ENCODE measurements at regions of chr14 and their contacts with region 1.

Region 1: GRCh38 chr14:105527661-105528581 is 1.5 kb downstream of the TMEM121 start:
- DNase-seq: peak; percentile 65 to 86 (median 78)
- ATAC-seq: peak; percentile 89
- H3K4me3 ChIP-seq: peak overlapping the region; percentile 54
- H3K4me3 Mint-ChIP-seq: peak overlapping the region; percentile 42 to 89 (median 72)
- H3K27ac ChIP-seq: no peak overlapping the region
- H3K27ac Mint-ChIP-seq: peak overlapping the region in 2 of 9 donors; percentile 32 to 49
- H3K4me1 ChIP-seq: peaks cover 9 to 14% of the 10 kb centered on the region in 2 donors
- H3K4me1 Mint-ChIP-seq: peaks cover 0 to 24% (median 16%) of the 10 kb centered on the region in 7 donors
- H3K27me3 ChIP-seq: peaks cover 0 to 4% of the 10 kb centered on the region in 2 donors
- H3K27me3 Mint-ChIP-seq: peaks cover 0 to 43% (median 0%) of the 10 kb centered on the region in 5 donors

Region 2: GRCh38 chr14:105203057-105203531 is 324.8 kb before region 1 on chr14:
- CTCF ChIA-PET with region 1: no interaction called
- POLR2A ChIA-PET with region 1: no interaction called
- intact Hi-C with region 1: loop called in 1 of 2 experiments (anchors 1 kb)
- DNase-seq: peak in 6 of 9 donors; percentile 30 to 75 (median 58)
- ATAC-seq: peak; percentile 58
- H3K4me3 ChIP-seq: no peak overlapping the region
- H3K4me3 Mint-ChIP-seq: no peak overlapping the region
- H3K27ac ChIP-seq: no peak overlapping the region
- H3K27ac Mint-ChIP-seq: no peak overlapping the region
- H3K4me1 ChIP-seq: peaks cover 0 to 18% of the 10 kb centered on the region in 2 donors
- H3K4me1 Mint-ChIP-seq: peaks cover 9 to 15% (median 13%) of the 10 kb centered on the region in 7 donors
- H3K27me3 ChIP-seq: peaks cover 0 to 2% of the 10 kb centered on the region in 2 donors
- H3K27me3 Mint-ChIP-seq: peaks cover 6 to 26% (median 12%) of the 10 kb centered on the region in 5 donors

Region 3: GRCh38 chr14:105368965-105369652 is 158.8 kb before region 1 on chr14:
- CTCF ChIA-PET with region 1: interaction called, 7 read pairs
- POLR2A ChIA-PET with region 1: no interaction called
- intact Hi-C with region 1: loop called (anchors 1 kb)
- DNase-seq: no peak
- ATAC-seq: no peak
- H3K4me3 ChIP-seq: no peak overlapping the region
- H3K4me3 Mint-ChIP-seq: no peak overlapping the region
- H3K27ac ChIP-seq: no peak overlapping the region
- H3K27ac Mint-ChIP-seq: no peak overlapping the region
- H3K4me1 ChIP-seq: peaks cover 7 to 9% of the 10 kb centered on the region in 2 donors
- H3K4me1 Mint-ChIP-seq: peaks cover 2 to 9% (median 5%) of the 10 kb centered on the region in 7 donors
- H3K27me3 ChIP-seq: no peaks in the 10 kb centered on the region
- H3K27me3 Mint-ChIP-seq: no peaks in the 10 kb centered on the region

Region 4: DNA sequence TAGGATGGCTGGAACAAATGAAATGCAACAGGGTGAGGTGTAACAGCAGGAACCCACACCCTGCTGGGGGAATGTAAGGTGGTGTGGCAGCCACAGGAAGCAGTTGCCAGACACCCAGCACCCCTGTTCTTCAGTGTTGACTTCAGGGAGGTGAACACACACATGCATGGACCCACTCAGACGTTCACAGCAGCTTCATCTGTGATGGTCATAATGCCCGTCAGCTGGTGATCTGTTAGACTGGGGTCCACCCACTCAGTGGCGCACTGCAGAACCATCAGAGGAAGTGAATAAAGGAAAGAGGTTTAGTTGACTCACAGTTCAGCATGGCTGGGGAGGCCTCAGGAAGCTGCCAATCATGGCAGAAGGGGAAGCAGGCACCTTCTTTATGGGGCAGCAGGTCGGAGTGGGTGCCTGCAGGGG is 152.3 kb before region 1 on chr14:
- CTCF ChIA-PET with region 1: interaction called, 7 read pairs
- POLR2A ChIA-PET with region 1: no interaction called
- intact Hi-C with region 1: loop called (anchors 1 kb)
- DNase-seq: peak in 1 of 9 donors; percentile 44
- ATAC-seq: peak; percentile 68
- H3K4me3 ChIP-seq: no peak overlapping the region
- H3K4me3 Mint-ChIP-seq: peak overlapping the region in 2 of 10 donors; percentile 2 to 56
- H3K27ac ChIP-seq: no peak overlapping the region
- H3K27ac Mint-ChIP-seq: peak overlapping the region in 7 of 9 donors; percentile 3 to 90 (median 60)
- H3K4me1 ChIP-seq: no peaks in the 10 kb centered on the region
- H3K4me1 Mint-ChIP-seq: peaks cover 10 to 14% (median 12%) of the 10 kb centered on the region in 7 donors
- H3K27me3 ChIP-seq: no peaks in the 10 kb centered on the region
- H3K27me3 Mint-ChIP-seq: no peaks in the 10 kb centered on the region

Region 5: DNA sequence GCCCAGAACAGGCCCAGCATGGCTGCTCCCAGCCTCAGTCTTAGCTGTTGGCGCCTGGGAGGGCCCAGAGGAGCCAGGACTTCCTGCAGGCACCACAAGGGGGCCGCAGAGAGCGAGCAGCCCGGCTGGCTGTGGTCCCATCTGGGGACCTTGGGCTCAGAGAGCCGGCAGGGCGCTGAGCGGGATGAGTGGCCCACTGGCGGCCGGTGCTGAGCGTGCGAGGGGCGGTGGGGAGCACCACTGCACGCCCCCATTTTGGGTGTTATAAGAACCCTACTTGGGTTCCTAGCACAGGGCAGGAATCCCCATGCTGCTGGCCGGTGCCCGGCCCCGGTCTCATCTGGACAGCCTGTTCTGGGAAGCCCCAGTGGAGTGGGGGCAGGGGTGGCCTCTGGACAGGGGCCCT is 79.2 kb before region 1 on chr14:
- CTCF ChIA-PET with region 1: no interaction called
- POLR2A ChIA-PET with region 1: no interaction called
- intact Hi-C with region 1: loop called in 1 of 2 experiments (anchors 1 kb)
- DNase-seq: peak; percentile 45 to 76 (median 63)
- ATAC-seq: peak; percentile 92
- H3K4me3 ChIP-seq: no peak overlapping the region
- H3K4me3 Mint-ChIP-seq: no peak overlapping the region
- H3K27ac ChIP-seq: no peak overlapping the region
- H3K27ac Mint-ChIP-seq: no peak overlapping the region
- H3K4me1 ChIP-seq: no peaks in the 10 kb centered on the region
- H3K4me1 Mint-ChIP-seq: peaks cover 0 to 3% (median 0%) of the 10 kb centered on the region in 7 donors
- H3K27me3 ChIP-seq: no peaks in the 10 kb centered on the region
- H3K27me3 Mint-ChIP-seq: no peaks in the 10 kb centered on the region

Region 6: DNA sequence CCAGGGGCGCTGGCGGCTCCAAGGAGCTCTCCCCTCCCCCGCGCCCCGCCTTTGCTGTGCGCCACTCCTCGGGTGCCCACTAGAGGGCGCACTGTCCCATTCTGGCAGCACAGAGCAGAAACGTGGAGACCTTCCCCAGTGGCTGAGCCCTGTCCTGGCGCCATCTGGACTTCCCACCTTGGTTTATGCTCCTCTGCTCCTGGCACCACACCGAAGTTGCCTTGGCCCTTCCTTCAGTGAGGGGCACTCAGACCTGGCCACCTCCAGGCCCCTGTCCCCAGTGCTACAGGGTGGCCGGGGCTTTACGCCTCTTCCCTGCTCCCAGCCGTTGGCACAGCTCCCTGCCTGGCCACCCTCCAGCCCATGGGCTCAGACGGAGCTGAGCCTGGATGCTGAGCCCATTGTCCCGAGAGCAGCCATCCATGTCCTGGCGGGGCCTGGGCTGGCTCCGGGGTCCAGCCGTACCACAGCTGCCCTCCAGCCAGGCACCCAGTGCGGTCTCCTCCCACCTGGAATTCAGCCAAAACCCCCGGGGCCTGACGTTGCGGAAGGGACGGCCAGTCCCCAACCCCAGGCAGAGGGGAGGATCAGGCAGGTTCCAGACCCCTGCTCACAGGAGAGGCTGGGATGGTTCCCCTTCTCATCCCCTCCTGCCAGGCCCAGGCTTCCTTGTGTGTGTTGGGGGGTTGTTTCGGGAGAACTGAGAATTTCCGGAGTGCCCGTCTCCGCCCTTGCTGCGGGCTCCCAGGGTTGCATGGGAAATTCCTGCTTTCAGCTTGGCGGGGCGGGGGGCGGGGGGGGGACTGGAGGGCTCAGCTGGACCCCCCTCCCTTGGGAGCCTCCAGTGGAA is 46.7 kb before region 1 on chr14:
- CTCF ChIA-PET with region 1: no interaction called
- POLR2A ChIA-PET with region 1: no interaction called
- intact Hi-C with region 1: loop called (anchors 1 to 2 kb)
- DNase-seq: peak; percentile 86 to 98 (median 94)
- ATAC-seq: peak; percentile 74
- H3K4me3 ChIP-seq: peak overlapping the region; percentile 82
- H3K4me3 Mint-ChIP-seq: peak overlapping the region; percentile 73 to 92 (median 86)
- H3K27ac ChIP-seq: peak overlapping the region; percentile 100
- H3K27ac Mint-ChIP-seq: peak overlapping the region; percentile 91 to 100 (median 99)
- H3K4me1 ChIP-seq: peaks cover 56 to 78% of the 10 kb centered on the region in 2 donors
- H3K4me1 Mint-ChIP-seq: peaks cover 29 to 72% (median 43%) of the 10 kb centered on the region in 7 donors
- H3K27me3 ChIP-seq: no peaks in the 10 kb centered on the region
- H3K27me3 Mint-ChIP-seq: peaks cover 0 to 35% (median 0%) of the 10 kb centered on the region in 5 donors

Region 7: DNA sequence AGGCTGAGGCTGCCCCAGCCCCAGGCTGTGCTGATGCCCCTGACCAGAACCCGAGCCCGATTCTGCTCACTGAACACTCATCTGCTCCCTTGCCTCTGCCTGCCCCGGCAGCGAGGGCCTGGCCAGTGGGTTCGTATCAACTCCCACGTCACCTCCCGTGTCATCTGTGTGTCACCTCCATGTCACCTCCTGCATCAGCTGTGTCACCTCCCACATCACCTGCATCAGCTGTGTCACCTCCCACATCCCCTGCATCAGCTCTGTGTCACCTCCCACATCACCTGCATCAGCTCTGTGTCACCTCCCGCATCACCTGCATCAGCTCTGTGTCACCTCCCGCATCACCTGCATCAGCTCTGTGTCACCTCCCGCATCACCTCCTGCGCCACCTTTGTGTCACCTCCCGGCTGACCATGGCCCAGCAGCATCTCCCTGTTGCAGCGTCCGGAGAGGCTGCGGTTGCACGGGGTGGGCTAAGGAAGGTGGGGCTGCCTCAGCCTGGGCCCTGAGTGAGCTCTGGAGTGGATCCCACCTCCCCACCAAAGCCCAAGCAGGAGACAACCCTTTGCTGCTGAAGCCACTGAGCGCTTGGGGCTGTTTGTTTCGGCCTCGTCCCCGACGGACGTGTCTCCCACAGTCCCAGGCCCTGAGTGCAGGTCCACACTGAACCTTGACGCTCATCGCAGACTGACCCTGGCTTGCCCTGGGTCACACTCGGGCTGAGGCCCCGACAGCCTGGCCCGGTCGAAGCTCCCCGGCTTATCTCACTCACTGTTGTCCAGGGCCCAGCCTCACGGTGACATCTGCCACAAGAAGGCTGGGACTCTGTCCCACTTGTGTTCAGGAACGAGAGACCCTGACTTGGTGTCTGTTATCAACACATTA is 10.5 kb after region 1 on chr14:
- CTCF ChIA-PET with region 1: no interaction called
- POLR2A ChIA-PET with region 1: no interaction called
- intact Hi-C with region 1: no loop called
- DNase-seq: peak in 4 of 9 donors; percentile 26 to 51 (median 29)
- ATAC-seq: peak; percentile 65
- H3K4me3 ChIP-seq: no peak overlapping the region
- H3K4me3 Mint-ChIP-seq: peak overlapping the region in 1 of 10 donors; percentile 45
- H3K27ac ChIP-seq: no peak overlapping the region
- H3K27ac Mint-ChIP-seq: peak overlapping the region in 1 of 9 donors; percentile 31
- H3K4me1 ChIP-seq: peaks cover 0 to 6% of the 10 kb centered on the region in 2 donors
- H3K4me1 Mint-ChIP-seq: peaks cover 0 to 7% (median 0%) of the 10 kb centered on the region in 7 donors
- H3K27me3 ChIP-seq: no peaks in the 10 kb centered on the region
- H3K27me3 Mint-ChIP-seq: peaks cover 0 to 47% (median 11%) of the 10 kb centered on the region in 5 donors

Region 8: DNA sequence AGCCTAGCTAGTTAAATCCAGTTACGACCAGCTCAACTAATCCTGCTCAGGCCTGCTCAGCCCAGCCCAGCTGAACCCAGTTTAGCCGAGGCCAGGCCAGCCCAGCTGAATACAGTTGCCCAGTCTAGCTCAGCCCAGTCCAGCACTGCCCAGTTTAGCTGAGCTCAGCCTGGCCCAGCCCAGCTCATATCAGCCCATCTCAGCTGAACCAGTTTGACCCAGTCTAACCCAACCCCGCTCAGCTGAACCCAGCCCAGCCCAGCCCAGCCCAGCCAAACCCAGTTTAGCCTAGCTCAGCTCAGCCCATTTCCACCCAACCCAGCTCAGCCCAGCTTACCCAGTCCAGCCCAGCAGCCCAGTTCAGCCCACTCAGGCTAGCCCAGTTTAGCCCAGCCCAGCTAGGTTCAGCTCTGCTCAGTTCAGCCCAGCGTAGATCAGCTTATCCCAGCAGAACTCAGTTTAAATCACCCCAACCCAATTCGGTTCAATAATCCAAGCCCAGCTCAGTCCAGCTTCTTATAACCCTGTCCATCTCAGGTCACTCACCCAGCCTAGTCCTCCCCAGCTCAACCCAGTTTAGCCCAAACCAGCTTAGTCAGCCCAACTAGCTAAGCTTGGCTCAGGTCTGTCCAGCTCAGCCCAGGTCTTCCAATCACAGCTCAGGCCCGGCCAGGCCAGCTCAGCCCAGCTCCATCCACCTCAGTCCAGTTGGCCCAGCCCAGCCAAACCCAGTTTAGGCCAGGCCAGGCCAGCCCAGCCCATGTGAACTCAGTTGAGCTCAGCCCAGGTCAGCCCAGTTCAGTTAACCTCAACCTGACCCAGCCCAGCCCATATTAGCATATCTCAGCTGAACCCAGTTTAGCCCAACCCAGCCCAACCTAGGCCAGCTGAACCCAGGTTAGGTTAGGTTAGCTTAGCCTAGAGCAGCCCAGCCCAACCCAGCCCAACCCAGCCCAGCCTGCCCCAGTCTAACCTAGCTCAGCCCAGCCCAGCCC is 75.2 kb after region 1 on chr14:
- CTCF ChIA-PET with region 1: no interaction called
- POLR2A ChIA-PET with region 1: no interaction called
- intact Hi-C with region 1: no loop called
- DNase-seq: no peak
- ATAC-seq: no peak
- H3K4me3 ChIP-seq: no peak overlapping the region
- H3K4me3 Mint-ChIP-seq: no peak overlapping the region
- H3K27ac ChIP-seq: no peak overlapping the region
- H3K27ac Mint-ChIP-seq: peak overlapping the region in 1 of 9 donors; percentile 60
- H3K4me1 ChIP-seq: no peaks in the 10 kb centered on the region
- H3K4me1 Mint-ChIP-seq: no peaks in the 10 kb centered on the region
- H3K27me3 ChIP-seq: no peaks in the 10 kb centered on the region
- H3K27me3 Mint-ChIP-seq: no peaks in the 10 kb centered on the region